Pancreas (tissue), 10 donors: ENCODE measurements at regions of chr6 and their contacts with region 1.

Region 1: DNA sequence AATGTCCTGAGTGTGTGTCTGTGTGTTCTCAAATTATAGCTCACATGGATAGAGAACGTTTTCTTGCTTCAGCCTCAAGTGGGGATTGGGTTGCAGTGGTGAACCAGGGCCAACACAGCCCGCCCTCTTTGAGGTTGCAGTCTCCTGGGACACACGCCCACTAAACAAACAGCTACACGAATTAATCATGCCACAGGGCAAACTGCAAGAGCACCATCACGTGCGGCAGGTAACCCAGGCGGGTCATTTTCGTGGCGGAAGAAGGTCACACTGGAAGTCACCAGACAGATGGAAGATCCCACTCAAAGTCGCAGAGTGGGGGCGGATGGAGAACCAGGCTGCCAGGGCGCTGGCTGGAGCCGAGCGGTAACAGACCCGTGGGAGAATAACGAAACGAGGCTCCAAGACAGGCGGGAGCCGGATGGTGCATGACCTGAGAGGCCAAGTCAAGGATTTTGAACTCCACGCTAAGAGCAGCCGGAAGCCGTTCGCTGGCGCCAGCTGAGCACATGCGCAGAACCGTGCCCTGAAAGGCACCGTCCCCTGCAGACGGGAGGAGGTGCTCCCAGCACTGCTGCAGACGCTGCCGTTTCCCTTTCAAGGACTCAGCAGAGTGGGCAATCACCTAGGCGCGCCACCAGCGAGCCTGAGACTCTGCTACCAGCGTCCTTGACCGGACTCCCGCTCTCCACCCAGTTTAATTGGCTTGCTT is 10.7 kb downstream of the DLL1 start:
- DNase-seq: peak in 5 of 6 donors; percentile 62 to 85 (median 81)
- ATAC-seq: peak; percentile 48 to 90 (median 82)
- H3K4me3 ChIP-seq: peak overlapping the region in 2 of 4 donors; percentile 6 to 17
- H3K27ac ChIP-seq: peak overlapping the region in 3 of 4 donors; percentile 24 to 40 (median 25)
- H3K4me1 ChIP-seq: no peaks in the 10 kb centered on the region
- H3K27me3 ChIP-seq: no peaks in the 10 kb centered on the region
- CTCF ChIP-seq: no peak

Region 2: GRCh38 chr6:170049641-170050561 is 230.2 kb before region 1 on chr6:
- intact Hi-C with region 1: no loop called
- DNase-seq: peak in 5 of 6 donors; percentile 26 to 53 (median 44)
- ATAC-seq: peak; percentile 38 to 74 (median 67)
- H3K4me3 ChIP-seq: no peak overlapping the region
- H3K27ac ChIP-seq: peak overlapping the region in 1 of 4 donors; percentile 52
- H3K4me1 ChIP-seq: no peaks in the 10 kb centered on the region
- H3K27me3 ChIP-seq: no peaks in the 10 kb centered on the region
- CTCF ChIP-seq: no peak

Region 3: DNA sequence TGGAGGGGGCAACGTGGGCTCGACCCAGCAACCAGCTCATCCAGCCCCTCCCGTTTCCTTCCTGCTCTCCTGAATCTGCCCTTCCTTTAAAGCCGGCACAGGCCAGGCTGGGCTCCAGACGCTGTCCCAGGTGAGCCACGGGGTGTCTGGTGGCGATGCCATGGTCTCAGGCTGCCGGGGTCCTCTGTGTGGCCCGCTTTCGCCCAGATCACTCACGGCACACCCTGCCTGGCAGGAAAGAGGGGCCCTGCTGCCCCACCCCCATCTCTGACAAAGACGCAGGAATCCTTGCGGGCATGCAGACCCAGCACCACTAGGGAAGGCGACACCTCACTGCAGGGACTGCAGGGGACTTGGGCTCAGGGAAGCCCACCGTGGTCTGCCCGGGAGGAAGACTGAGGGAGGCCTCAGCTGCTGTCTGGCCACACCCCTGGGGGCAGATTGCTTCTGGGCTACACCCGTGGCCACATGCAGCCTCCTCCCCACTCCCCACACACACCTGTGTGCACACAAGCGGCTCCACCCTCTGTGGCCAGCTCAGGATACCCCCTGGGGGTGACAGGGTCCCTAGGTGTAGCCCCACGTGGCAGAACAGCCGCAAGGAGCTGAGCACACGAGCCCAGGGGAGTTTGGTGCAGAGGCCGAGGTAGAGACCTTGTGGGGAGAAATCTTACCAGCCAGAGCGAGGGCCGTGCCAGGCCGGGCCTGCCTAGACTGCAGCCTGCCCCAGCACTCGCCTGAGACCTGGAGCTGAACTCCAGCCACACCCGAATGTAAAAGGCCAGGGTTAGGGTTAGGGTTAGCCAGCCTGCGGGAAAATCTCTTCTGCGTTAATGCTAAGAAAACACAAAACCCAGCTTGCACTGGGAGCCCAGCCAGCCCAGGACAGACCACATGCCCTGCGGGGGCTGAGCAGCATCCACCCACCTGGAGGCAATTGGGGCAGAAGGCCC is 93.9 kb before region 1 on chr6:
- intact Hi-C with region 1: loop called in 1 of 3 experiments (anchors 10 kb)
- DNase-seq: peak in 1 of 6 donors; percentile 11
- ATAC-seq: no peak
- H3K4me3 ChIP-seq: no peak overlapping the region
- H3K27ac ChIP-seq: no peak overlapping the region
- H3K4me1 ChIP-seq: no peaks in the 10 kb centered on the region
- H3K27me3 ChIP-seq: no peaks in the 10 kb centered on the region
- CTCF ChIP-seq: no peak